Gastrocnemius medialis (tissue), 4 donors: ENCODE measurements at regions of chr9 and their contacts with region 1.

Region 1: DNA sequence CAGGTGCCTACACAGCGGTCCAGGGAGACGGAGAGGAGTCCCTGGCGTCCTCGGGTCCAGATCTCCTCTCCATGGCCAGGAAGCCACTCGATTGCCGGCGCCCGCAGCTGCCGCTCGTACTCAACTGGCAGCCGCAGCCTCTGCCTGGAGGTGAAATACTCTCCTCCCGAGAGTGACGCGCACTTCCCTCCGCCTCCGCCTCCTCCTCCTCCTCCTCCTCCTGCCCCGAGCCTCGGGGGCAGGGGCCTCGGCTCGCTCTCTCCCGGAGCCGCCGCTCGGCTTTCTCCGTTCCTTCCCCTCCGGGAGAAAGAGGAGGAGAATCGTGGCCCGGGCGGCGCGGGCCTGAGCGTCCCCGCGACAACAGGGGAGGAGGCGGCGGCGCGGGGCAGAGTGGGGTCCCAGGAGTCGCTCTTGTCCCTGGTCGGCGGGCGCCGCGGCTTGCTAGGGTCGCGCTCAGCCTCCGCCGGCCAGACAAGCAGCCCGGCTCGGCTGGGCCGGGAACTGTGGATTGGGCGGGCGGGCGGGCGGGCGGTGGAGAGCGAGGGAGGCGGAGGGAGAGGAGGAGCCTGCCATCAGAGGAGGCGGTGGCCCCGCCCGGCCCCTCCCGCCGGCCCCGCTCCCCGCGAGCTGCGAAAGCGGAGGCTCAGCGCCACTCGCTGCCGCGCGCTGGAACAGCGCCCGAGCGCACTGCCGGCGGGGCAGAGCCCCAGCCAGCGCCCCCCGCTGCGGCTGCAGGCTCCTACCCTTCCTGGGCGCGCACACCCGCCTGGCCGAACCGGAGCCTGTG is at the start of gene CEMIP2:
- DNase-seq: peak; percentile 88 to 89
- ATAC-seq: peak; percentile 82 to 84
- H3K4me3 ChIP-seq: peak within 1 kb of the TSS; percentile 85 to 95 (median 91)
- H3K27ac ChIP-seq: peak within 1 kb of the TSS; percentile 94 to 100 (median 99)
- H3K4me1 ChIP-seq: peaks cover 45% of the 10 kb centered on the region in 2 donors
- H3K27me3 ChIP-seq: no peaks in the 10 kb centered on the region
- CTCF ChIP-seq: no peak
- POLR2A ChIP-seq: peak; percentile 91 to 96
- total RNA-seq, gene CEMIP2: 10.6 to 29.9 (median 14.7) TPM

Region 2: GRCh38 chr9:70609542-70610286 is 1158.9 kb before region 1 on chr9:
- in situ Hi-C with region 1: no loop called
- intact Hi-C with region 1: loop called (anchors 10 kb)
- DNase-seq: peak; percentile 76 to 78
- ATAC-seq: peak; percentile 95 to 98
- H3K4me3 ChIP-seq: no peak overlapping the region
- H3K27ac ChIP-seq: peak overlapping the region; percentile 77 to 88 (median 80)
- H3K4me1 ChIP-seq: peaks cover 43 to 51% of the 10 kb centered on the region in 2 donors
- H3K27me3 ChIP-seq: no peaks in the 10 kb centered on the region
- CTCF ChIP-seq: no peak
- POLR2A ChIP-seq: peak in 1 of 2 donors; percentile 39

Region 3: DNA sequence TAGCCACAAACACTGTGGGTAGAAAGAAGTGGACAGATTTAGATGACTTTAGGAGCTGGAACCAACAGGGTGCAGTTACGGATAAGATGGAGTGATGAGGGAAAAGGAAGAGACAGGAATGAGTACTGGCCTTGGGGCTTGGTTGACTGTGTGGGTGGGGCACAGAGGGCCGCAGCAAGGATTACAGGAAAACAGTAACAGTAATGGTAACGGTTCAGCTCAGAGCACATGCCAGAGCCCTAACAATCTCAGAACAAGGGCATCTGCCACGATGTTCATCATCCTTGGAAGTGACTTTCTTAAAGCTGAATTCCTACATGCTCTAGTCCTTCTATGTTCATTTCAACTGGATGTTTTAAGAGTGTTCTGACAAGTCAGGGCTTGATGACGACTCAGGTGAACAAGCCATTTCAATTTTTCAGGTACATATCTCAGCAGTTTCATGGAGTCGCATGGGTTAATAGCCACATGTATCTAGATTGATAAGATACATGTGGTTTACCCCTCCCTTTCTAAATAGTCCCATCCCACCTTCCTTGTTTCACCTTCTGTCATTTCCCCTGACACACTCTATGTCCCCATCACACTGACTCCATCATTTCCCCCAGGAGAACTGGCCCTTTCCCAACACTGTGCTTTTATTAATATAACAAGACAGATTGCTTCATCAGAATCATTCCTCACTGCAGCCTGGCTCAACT is 65.3 kb before region 1 on chr9:
- in situ Hi-C with region 1: no loop called
- intact Hi-C with region 1: loop called (anchors 5 kb)
- DNase-seq: peak; percentile 8 to 40
- ATAC-seq: peak; percentile 80 to 91
- H3K4me3 ChIP-seq: no peak overlapping the region
- H3K27ac ChIP-seq: no peak overlapping the region
- H3K4me1 ChIP-seq: peaks cover 0 to 7% of the 10 kb centered on the region in 2 donors
- H3K27me3 ChIP-seq: no peaks in the 10 kb centered on the region
- CTCF ChIP-seq: no peak
- POLR2A ChIP-seq: no peak

Region 4: DNA sequence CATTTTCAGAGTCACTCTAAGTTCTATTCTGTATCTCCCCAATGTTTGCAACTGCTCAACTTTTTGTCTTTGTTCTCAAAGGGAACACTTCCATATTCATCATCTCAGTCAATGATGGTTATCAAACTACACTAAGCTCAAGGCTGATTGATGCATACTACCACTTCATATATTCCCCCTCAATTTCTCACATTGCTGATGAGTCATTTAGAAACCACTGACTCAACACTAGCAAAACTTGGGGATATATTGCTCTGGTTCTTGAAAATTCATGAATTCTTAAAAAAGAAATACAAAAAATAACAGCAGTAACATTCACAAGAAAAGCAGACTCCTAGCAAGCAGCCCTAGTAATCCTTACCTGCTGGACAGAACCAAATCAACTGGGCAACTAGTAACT is 90.2 kb after region 1 on chr9:
- in situ Hi-C with region 1: loop called in 1 of 4 experiments (anchors 25 kb)
- intact Hi-C with region 1: no loop called
- DNase-seq: no peak
- ATAC-seq: no peak
- H3K4me3 ChIP-seq: no peak overlapping the region
- H3K27ac ChIP-seq: no peak overlapping the region
- H3K4me1 ChIP-seq: no peaks in the 10 kb centered on the region
- H3K27me3 ChIP-seq: no peaks in the 10 kb centered on the region
- CTCF ChIP-seq: no peak
- POLR2A ChIP-seq: no peak

Region 5: DNA sequence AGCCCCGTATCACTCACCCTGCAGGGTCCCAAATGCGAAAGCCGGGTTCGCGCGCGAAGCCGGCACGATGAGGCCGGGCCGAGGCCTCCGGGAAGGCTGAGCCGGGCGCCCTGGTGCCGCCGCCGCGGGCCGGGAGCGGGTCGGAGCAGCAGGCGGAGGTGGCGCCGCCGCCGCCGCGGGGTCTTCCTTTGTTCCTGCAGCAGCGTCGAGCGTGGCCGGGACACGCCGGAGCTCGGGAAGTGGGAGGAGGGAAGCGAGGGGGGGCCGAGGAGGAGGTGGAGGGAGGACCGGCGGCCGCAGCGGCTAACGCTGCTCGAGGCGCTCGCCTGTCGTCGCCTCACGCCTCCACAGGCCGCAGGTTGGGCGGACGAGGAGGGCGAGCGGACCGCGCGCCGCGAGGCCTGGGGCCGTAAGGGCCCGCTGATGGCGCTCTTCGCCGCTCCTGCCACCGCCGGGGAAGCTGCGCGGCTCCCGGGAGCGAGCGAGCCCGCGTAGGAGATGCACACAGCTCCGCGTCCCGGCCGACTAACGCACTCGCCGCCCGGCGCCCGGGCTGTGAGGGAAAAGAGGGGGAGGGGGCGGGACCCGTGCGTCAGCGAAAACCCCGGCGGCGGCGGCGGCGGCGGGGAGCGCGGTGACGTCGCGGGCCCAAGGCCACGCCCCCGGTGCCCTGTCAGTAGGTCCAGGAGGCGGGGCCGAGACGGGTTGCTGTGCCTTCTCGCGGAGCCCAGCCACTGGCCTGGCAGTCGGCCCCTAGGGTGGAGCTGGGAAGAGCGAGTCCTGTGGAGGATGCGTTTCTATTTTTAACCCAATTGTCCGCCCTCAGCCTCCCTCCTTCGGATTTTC is 596.3 kb after region 1 on chr9 and contains the start of gene ZFAND5:
- in situ Hi-C with region 1: no loop called
- intact Hi-C with region 1: loop called (anchors 10 kb)
- DNase-seq: peak; percentile 98 to 99
- ATAC-seq: peak; percentile 53 to 72
- H3K4me3 ChIP-seq: peak within 1 kb of the TSS; percentile 76 to 93 (median 85)
- H3K27ac ChIP-seq: peak within 1 kb of the TSS; percentile 94 to 99 (median 98)
- H3K4me1 ChIP-seq: peaks cover 16 to 17% of the 10 kb centered on the region in 2 donors
- H3K27me3 ChIP-seq: no peaks in the 10 kb centered on the region
- CTCF ChIP-seq: peak in 2 of 5 experiments; percentile 19 to 31
- POLR2A ChIP-seq: peak; percentile 100
- total RNA-seq, gene ZFAND5: 316 to 2,069 (median 561) TPM